ENCODE measurements at regions of chr5 and their contacts with region 1.

Region 1: GRCh38 chr5:134026521-134027268 is 21.9 kb upstream of the VDAC1 start:
- DNase-seq: peak; percentile 72
- H3K4me3 ChIP-seq: no peak overlapping the region
- H3K27ac ChIP-seq: no peak overlapping the region
- H3K4me1 ChIP-seq: peaks cover 18% of the 10 kb centered on the region
- H3K27me3 ChIP-seq: no peaks in the 10 kb centered on the region
- CTCF ChIP-seq: peak; percentile 79 to 80

Region 2: GRCh38 chr5:133489632-133490031 is 537.1 kb before region 1 on chr5:
- CTCF ChIA-PET with region 1: interaction called, 14 read pairs
- dilution Hi-C with region 1: no loop called
- in situ Hi-C with region 1: no loop called
- intact Hi-C with region 1: no loop called
- DNase-seq: peak; percentile 37
- H3K4me3 ChIP-seq: no peak overlapping the region
- H3K27ac ChIP-seq: no peak overlapping the region
- H3K4me1 ChIP-seq: no peaks in the 10 kb centered on the region
- H3K27me3 ChIP-seq: no peaks in the 10 kb centered on the region
- CTCF ChIP-seq: peak in 1 of 2 donors; percentile 52

Region 3: DNA sequence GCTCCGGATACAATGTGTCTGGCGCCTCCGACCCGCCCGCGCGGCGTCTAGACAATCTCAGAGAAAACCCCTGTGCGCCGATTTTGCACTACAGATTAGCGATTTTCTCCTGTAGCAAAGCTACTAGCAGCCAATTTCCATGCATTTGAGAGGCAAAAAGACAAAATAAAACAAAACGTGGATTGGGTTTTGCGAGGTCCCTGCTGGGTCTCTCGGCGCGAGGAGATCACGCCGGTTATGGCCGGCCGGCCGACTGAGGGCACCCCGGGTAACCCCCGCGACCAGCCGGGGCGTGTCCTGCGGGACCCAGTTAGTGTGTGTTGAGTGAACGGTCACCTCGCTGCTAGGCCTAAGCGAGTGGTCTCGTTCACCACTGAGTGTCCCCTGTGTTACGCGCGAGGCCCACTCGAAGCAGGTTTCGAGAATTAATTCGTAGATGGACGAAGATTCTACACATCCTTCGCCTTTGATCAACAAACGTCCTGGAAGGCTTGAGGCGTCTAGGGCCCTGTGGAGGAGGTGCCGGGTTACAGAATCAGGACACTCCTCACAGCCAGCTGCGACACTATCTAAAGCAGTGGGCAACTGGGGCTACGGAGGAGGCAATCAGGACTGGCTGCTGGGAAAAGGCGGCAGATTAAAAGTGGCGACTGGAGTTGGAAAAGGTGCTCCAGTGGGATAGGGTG is 21.2 kb before region 1 on chr5:
- CTCF ChIA-PET with region 1: interaction called, 16 read pairs
- dilution Hi-C with region 1: no loop called
- in situ Hi-C with region 1: no loop called
- intact Hi-C with region 1: no loop called
- DNase-seq: no peak
- H3K4me3 ChIP-seq: peak overlapping the region; percentile 69 to 87 (median 84)
- H3K27ac ChIP-seq: peak overlapping the region; percentile 86
- H3K4me1 ChIP-seq: peaks cover 26% of the 10 kb centered on the region
- H3K27me3 ChIP-seq: no peaks in the 10 kb centered on the region
- CTCF ChIP-seq: peak in 1 of 2 donors; percentile 19

Region 4: DNA sequence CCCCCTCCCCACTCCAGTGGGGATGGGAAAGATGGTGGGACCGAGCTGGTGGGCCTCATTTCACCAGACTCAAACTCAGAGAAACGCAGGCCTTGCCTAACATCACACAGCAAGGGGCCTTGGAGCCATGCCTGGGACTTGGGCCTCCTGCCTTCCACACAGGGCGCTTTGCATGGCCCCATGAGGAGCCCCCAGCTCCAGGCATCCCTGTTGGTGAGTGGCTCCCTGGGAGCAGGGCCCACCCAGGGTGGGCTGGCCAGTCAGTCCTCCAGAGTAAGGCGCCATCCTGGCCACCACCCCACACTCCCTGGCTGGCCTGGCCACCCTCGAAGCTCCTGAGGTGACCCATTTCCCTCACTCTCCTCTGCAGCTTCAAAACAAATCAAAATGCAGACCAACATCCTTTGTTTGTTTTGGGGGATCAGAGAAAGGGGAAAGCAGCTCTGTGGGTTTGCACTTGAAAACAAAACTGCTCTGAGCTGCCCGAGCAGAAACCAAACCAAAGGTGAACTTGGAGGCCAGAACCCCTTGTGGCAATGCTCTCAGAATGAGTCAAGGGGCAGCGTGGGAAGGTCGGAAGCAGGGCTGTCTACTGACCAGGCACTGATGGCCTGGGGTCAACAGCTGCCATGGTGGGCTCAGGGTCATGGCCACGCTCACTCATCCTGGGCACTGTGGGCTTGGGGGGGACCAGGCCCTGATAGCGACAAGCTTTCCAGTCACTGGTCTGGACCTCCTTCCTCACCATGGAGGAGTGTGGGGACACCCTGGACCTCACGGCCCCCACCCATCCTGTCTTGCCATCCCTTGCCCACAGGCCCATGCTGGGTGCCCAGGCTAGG is 15.1 kb after region 1 on chr5:
- CTCF ChIA-PET with region 1: interaction called, 19 read pairs
- dilution Hi-C with region 1: no loop called
- in situ Hi-C with region 1: no loop called
- intact Hi-C with region 1: loop called (anchors 1 kb)
- DNase-seq: no peak
- H3K4me3 ChIP-seq: no peak overlapping the region
- H3K27ac ChIP-seq: no peak overlapping the region
- H3K4me1 ChIP-seq: no peaks in the 10 kb centered on the region
- H3K27me3 ChIP-seq: no peaks in the 10 kb centered on the region
- CTCF ChIP-seq: no peak

Region 5: DNA sequence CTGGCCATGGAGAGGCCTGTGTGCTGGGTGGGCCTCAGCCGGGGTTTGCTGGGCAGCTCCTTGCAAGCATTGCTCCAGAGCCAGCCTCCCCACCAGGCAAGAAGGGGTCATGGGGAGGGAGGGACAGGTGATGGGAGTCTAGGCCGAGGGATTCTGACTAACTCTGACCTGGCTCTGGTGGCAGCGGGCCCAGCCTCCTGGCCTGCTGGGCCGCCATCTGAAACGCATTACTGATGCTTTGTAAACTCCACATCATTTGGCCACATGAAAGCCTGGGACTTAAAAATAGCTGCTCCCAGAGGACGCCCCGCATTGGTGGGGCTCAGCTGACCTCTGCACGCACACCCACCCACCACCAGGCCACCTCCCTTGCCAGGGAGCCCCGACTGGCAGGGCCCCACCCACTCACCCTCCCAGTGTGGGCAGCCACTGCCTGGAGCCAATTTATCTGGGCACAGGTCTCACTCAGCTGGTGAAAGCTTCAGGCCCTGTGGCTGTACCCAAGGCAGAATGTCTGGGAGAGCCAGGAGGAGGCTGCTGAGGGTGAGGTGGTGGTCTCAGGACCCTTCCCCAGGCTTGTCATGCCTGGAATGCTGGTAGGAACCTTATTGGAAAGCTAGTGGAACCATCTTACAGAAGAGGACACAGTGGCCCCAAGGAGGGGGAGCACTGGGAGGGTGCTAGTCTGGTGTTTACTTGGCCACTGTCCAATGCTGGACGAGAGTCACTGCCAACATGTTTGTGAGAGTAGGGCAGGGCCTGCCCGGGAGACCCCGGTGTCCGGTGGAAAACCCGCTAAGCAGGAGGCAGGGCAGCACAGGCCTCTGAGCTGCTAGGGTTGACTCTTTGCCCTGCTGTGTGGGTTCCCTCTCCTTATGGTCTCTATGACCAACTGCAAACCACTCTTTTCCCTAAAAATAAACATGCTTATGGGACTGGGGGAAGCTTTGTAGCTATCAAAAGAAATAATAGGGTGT is 98.6 kb after region 1 on chr5:
- CTCF ChIA-PET with region 1: no interaction called
- dilution Hi-C with region 1: no loop called
- in situ Hi-C with region 1: loop called in 1 of 2 experiments (anchors 5 kb)
- intact Hi-C with region 1: no loop called
- DNase-seq: peak; percentile 83
- H3K4me3 ChIP-seq: no peak overlapping the region
- H3K27ac ChIP-seq: peak overlapping the region; percentile 13
- H3K4me1 ChIP-seq: peaks cover 46% of the 10 kb centered on the region
- H3K27me3 ChIP-seq: no peaks in the 10 kb centered on the region
- CTCF ChIP-seq: no peak

Region 6: DNA sequence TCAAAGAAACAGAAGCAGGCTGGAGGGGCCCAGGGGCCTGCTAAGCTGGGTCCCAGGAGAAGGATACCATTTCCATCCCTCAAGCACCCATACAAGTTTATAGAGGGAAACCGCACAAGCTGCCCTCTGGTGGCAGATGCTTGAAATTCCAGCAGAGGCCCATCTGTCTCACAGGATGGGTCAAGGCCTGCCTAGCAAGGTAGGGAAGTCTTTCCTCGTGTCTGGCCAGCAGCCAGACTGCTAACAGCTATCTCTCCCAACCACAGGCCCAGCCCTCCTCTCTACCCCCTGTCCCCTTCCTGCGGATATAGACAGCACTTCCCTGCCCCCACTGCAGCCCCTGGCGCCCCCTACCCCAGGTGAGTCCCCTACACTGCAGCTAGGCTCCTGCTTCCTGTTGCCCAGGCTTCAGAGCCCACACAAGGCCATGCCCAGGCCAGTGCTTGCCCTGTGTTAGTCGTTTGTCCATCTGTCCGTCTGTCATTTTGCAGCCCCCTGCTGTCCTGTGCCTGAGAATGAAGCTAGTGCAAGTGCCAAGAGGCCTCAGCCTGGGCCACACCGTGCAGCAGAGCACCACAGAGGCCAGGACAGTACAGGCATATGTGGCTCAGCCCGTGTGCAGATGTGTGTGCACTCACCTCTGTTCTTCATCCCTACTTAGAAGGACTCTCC is 114.0 kb after region 1 on chr5:
- CTCF ChIA-PET with region 1: no interaction called
- dilution Hi-C with region 1: no loop called
- in situ Hi-C with region 1: no loop called
- intact Hi-C with region 1: loop called (anchors 1 kb)
- DNase-seq: peak; percentile 86
- H3K4me3 ChIP-seq: no peak overlapping the region
- H3K27ac ChIP-seq: no peak overlapping the region
- H3K4me1 ChIP-seq: peaks cover 36% of the 10 kb centered on the region
- H3K27me3 ChIP-seq: no peaks in the 10 kb centered on the region
- CTCF ChIP-seq: peak; percentile 85 to 90

Region 7: DNA sequence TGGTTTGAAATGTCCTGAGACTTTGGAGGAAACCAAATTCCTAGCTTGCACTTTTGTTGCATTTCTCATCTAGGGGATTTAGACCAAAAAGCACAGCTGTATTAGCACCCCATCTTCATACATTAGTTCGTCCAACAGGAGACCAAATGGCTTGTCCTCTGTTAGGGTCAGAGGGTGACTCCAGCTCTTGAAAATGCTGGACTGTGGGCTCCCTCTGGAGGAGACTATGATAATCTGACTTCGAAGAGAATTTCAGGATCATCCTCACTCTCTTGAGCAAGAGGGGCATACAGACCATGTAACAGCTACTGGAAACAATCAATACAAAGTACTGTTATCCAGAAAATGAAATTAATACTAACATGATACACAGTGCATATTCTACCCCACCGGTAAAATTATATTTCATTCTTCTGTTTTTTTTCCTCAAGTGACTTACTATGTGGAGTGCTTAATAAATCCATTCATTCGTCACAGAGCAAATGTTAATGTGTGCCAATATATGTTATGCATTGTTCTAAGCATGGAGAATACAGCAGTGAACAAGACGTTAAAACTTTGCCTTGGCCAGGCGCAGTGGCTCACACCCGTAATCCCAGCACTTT is 262.9 kb after region 1 on chr5:
- CTCF ChIA-PET with region 1: no interaction called
- dilution Hi-C with region 1: no loop called
- in situ Hi-C with region 1: loop called in 1 of 2 experiments (anchors 25 kb)
- intact Hi-C with region 1: no loop called
- DNase-seq: peak; percentile 52
- H3K4me3 ChIP-seq: no peak overlapping the region
- H3K27ac ChIP-seq: no peak overlapping the region
- H3K4me1 ChIP-seq: no peaks in the 10 kb centered on the region
- H3K27me3 ChIP-seq: no peaks in the 10 kb centered on the region
- CTCF ChIP-seq: peak; percentile 76 to 78

Measured in mammary epithelial cell (primary cell).